Cardiac septum (tissue), 1 donor: ENCODE measurements at regions of chr2 and their contacts with region 1.

Region 1: GRCh38 chr2:18149645-18150246 is 271.3 kb downstream of the KCNS3 start:
- DNase-seq: no peak

Region 2: DNA sequence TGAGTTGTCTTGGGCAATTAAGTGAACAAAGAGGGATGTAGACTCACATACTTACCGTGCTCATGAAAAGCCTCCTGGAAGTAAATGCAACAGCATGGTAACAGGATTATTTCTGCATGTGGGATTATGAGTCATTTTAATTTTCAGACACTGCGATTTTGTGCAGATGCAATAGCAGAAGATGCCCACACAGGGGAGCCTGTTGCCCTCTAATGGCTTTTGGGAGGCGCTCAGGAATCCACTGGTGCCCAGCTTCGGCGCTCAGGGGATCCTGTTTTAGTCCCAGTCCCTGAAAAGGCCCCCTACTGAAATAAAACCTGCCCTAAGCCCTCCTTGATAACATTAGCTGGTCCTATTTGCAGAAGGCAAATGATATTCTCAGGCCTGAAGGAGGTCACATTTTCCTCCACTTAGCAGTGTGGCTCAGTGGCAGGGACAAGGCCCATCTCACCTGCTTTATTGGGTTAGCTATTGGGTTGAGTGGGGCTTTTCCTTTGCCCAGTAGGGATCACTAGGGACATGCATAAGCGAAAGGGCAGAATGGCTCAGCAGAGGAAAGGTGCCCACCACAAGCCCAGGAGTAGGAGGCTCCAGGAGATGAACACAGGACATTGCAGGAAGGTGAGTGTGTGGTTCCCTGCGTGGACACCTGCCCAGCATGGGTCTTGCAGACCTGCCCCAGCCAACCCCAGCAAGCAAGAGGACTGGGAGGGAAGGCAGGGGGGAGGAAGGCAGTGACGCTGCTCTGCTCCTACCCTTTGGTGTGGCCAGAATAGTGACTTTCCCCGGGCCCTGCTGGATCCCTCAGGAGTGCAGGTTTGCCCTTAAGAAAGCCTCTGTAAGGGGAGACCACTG is 297.8 kb before region 1 on chr2:
- intact Hi-C with region 1: loop called (anchors 1 kb)
- DNase-seq: no peak